ENCODE measurements at regions of chr7 and their contacts with region 1.

Region 1: GRCh38 chr7:132049462-132050304 is 493.3 kb upstream of the PODXL start:
- DNase-seq: no peak
- ATAC-seq: no peak

Region 2: GRCh38 chr7:131692131-131692960 is 357.3 kb before region 1 on chr7:
- intact Hi-C with region 1: loop called in 1 of 2 experiments (anchors 10 kb)
- DNase-seq: peak; percentile 62
- ATAC-seq: peak; percentile 56 to 76

Measured in left cardiac atrium (tissue), 4 donors.